ENCODE measurements at regions of chr17 and their contacts with region 1.

Region 1: GRCh38 chr17:57995076-57995956 is 7.3 kb upstream of the VEZF1 start:
- DNase-seq: no peak
- H3K4me3 ChIP-seq: no peak overlapping the region
- H3K27me3 ChIP-seq: no peaks in the 10 kb centered on the region
- CTCF ChIP-seq: peak; percentile 68

Region 2: DNA sequence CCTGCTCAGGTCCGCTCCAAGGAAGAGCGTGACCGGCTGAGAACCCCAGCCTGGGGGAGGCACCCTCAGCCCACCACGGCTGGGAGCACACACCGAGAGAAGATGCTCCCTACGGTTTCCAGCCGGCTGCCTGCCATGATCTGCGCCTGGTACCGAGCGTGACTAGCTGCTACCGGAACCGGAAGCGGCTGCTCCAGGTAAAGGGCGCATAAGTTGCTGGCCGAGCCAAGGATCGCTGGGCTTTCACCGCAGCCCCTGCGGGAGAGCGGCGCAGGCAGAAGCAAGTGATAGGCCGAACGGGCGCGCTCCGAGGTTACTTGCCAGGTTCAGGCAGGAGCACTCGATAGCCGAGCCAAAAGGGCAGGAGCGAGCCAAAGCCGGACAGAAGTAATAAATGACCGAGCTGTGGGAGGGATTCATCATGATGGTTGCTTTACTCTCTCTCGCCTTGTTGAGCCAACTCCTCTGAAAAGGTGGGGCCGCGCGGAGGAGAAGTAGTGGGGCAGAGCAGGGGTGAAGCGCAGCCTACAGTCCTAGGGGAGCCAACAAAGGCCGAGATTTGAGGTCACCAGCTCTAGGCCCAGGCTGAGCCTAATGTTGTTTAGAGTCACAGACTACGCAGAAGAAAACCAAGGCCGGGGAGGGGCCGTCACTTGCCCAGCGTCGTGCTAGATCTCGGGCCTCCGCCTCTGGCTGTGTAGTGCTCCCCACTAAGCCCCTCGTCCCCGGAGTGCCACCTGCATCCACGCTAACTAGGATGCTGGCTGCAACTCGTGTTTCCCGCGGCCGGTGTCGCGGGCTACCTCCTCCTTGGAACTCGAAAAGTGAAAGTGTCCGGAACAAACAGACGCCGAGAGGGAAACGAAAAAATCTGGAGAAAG is 145.2 kb before region 1 on chr17 and contains the start of gene MRPS23:
- CTCF ChIA-PET with region 1: interaction called, 371 read pairs
- POLR2A ChIA-PET with region 1: no interaction called
- DNase-seq: peak; percentile 90
- H3K4me3 ChIP-seq: peak within 1 kb of the TSS; percentile 75
- H3K27me3 ChIP-seq: no peaks in the 10 kb centered on the region
- CTCF ChIP-seq: no peak
- polyA plus RNA-seq, gene MRPS23: 33.7 and 34.1 TPM in 2 replicates

Region 3: DNA sequence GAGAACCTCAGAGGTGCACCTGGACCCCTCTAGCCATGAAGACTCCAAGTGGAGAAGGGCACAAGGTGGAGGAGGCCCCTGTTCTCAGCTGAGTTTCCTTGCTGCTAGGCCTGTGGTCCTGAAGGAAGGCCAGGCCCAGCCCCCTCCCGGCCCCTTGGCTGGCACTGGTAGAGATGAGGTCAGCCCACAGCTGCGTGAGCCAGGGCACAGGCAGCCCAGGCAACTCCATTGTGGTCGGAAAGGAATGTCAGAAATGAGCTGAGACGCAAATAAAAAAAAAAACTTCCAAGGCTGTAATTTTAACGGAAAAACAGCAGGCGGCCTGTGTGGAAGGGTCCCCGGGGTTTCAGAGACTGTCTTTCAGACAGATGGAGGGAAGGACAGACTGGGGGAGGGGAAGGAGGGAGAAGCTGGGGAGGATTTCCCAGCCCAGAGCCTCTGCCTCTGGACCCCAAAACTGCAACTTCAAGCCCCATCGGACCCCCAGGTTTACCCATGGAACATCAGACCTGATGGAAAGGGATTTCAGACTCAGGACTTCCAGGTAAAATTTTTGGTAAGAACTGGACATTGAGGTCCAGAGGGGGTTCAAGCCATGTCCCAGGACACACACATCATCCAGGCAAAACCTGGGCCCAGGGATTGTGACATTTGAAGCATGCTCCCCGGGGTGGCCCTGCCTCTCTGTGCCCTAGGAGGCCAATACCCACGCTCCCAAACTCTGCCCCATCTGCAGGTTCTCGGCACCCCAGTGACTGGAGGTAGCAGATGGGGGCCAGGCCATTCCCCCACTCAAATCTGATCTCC is 119.8 kb before region 1 on chr17:
- CTCF ChIA-PET with region 1: interaction called, 72 read pairs
- POLR2A ChIA-PET with region 1: interaction called, 5 read pairs
- DNase-seq: peak; percentile 90
- H3K4me3 ChIP-seq: 0 out of 2 replicates have a peak overlapping the region, but pooled peaks have one; percentile 7
- H3K27me3 ChIP-seq: no peaks in the 10 kb centered on the region
- CTCF ChIP-seq: peak; percentile 73

Region 4: GRCh38 chr17:57911834-57912673 is 83.3 kb before region 1 on chr17:
- CTCF ChIA-PET with region 1: no interaction called
- POLR2A ChIA-PET with region 1: no interaction called
- DNase-seq: no peak
- H3K4me3 ChIP-seq: no peak overlapping the region
- H3K27me3 ChIP-seq: no peaks in the 10 kb centered on the region
- CTCF ChIP-seq: no peak

Region 5: GRCh38 chr17:58112970-58113631 is 117.8 kb after region 1 on chr17:
- CTCF ChIA-PET with region 1: interaction called, 10 read pairs
- POLR2A ChIA-PET with region 1: no interaction called
- DNase-seq: no peak
- H3K4me3 ChIP-seq: no peak overlapping the region
- H3K27me3 ChIP-seq: peaks cover 3% of the 10 kb centered on the region
- CTCF ChIP-seq: peak; percentile 95